ENCODE measurements at regions of chr6 and their contacts with region 1.

Region 1: GRCh38 chr6:107981695-107982094 is 23.7 kb upstream of the SEC63 start:
- DNase-seq: no peak
- ATAC-seq: no peak
- H3K4me3 Mint-ChIP-seq: no peak overlapping the region
- H3K27ac Mint-ChIP-seq: no peak overlapping the region
- H3K4me1 Mint-ChIP-seq: no peaks in the 10 kb centered on the region
- H3K27me3 Mint-ChIP-seq: peaks cover 14% of the 10 kb centered on the region

Region 2: DNA sequence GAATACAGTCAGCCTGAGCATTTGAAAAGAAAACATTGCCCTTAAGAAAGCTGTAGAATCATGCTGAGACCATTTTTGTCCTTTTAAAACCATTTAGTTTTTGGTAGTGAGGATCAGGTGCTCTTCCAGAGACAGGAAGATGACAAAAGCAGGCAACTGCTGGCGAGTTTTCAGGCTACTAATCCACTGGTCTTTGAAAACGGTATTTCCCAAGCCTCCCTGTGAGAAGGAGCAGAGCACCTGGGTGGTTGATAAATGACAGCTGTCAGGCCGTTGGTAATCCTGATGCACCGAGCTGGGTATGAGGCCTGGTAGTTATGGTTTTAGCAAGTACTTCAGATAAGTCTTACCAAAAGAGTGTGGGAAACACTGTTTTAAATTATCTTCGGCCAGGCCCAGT is 13.6 kb before region 1 on chr6:
- CTCF ChIA-PET with region 1: interaction called, 11 read pairs
- DNase-seq: no peak
- ATAC-seq: no peak
- H3K4me3 Mint-ChIP-seq: no peak overlapping the region
- H3K27ac Mint-ChIP-seq: no peak overlapping the region
- H3K4me1 Mint-ChIP-seq: peaks cover 7% of the 10 kb centered on the region
- H3K27me3 Mint-ChIP-seq: peaks cover 8% of the 10 kb centered on the region